PC-3 (cell line): ENCODE measurements at regions of chr3 and their contacts with region 1.

Region 1: DNA sequence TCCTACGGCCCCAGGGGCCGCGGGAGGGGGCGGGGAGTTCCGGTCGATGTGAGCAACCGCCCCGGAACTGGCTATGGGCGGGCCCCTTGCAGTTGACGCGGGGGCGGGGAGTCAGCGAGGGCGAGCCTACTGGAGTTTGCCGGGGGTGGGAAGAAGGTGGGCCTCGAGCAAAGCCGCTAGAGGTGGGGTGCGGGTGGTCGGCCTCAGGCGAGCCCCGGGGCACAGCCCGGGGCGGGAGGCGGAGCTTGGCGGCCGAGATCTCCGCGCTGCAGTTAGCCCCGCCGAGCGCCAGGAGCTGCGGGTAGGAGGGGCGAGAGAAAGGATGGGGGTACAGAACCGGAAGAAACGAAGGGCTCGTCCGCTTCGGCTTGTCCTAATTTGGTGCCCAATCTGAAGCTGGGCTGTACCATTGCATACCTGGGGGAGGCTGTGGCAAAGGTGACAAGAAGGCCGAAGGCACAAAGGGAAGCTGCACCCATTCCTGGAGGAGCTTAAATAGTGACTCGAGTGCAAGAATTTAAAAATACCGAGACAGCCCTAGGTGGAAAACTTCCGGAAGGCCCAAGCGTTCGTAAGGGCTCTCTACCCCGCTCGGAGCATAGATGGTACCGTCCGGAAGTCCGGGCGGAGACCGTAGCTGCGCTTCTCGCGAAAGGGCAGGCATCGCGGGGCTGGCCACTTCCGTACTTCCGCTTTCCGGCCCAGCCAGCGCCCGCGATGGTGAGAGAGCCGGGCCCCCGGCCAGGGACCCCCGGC is at the starts of genes ARPC4 and TADA3:
- DNase-seq: peak; percentile 90
- ATAC-seq: peak; percentile 88
- H3K4me3 ChIP-seq: peak within 1 kb of the TSS; percentile 99
- H3K27ac ChIP-seq: peak within 1 kb of the TSS; percentile 79
- H3K4me1 ChIP-seq: peaks cover 11% of the 10 kb centered on the region
- H3K27me3 ChIP-seq: no peaks in the 10 kb centered on the region
- CTCF ChIP-seq: no peak
- total RNA-seq, gene ARPC4: 131 and 223 TPM in 2 replicates
- total RNA-seq, gene TADA3: 85.4 and 85.9 TPM in 2 replicates

Region 2: DNA sequence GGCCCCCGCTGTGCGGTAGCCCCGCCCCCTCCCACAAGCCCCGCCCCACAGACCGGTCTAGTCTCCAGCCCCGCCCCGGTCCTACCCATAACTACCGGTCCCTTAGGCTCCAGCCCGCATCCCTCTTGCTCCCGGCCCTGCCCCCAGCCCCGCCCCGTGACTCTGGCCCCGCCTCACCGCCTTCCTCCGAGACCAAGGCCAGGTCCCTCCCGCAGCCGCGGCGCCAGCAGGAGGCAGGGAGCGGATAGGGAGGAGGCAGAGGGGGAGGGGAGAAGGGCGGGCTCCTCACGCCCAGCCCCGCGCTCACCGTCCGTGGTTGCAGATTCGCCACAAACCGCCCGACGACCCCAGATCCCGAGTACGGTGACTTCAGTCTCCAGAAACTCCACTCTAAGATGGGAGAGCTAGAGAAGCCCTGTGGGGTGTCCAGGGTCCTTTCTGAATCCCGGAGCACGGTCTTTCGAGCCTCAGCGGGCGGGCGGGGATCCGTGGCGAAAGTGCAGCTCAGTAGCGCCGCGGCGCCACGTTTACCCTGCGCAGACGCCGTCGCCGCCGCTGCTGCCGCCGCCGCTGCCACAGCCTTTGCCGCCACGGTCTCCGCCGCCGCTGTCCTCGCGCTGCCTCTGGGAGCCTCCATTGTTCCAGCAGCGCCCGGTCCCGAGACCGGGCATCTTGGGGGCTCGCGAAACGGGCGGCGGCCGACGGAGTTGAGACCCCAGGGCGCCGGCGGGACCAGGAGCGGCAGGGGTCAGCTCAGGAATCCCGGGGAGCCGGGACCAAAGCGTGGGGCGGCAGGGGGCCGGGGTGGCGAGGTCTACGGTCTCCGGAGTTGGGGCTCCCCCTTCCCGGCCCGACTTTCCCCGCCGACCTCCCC is 61.1 kb before region 1 on chr3 and contains the start of gene BRPF1:
- CTCF ChIA-PET with region 1: no interaction called
- POLR2A ChIA-PET with region 1: no interaction called
- intact Hi-C with region 1: loop called (anchors 1 kb)
- DNase-seq: peak; percentile 98
- ATAC-seq: peak; percentile 96
- H3K4me3 ChIP-seq: peak within 1 kb of the TSS; percentile 89
- H3K27ac ChIP-seq: peak within 1 kb of the TSS; percentile 92
- H3K4me1 ChIP-seq: peaks cover 23% of the 10 kb centered on the region
- H3K27me3 ChIP-seq: no peaks in the 10 kb centered on the region
- CTCF ChIP-seq: no peak
- total RNA-seq, gene BRPF1: 27.0 and 29.8 TPM in 2 replicates

Region 3: GRCh38 chr3:9749645-9750555 is 42.7 kb before region 1 on chr3 and contains the start of gene OGG1:
- CTCF ChIA-PET with region 1: no interaction called
- POLR2A ChIA-PET with region 1: interaction called, 3 read pairs
- intact Hi-C with region 1: loop called (anchors 1 kb)
- DNase-seq: peak; percentile 98
- ATAC-seq: peak; percentile 91
- H3K4me3 ChIP-seq: peak within 1 kb of the TSS; percentile 83
- H3K27ac ChIP-seq: peak within 1 kb of the TSS; percentile 46
- H3K4me1 ChIP-seq: peaks cover 28% of the 10 kb centered on the region
- H3K27me3 ChIP-seq: no peaks in the 10 kb centered on the region
- CTCF ChIP-seq: no peak
- total RNA-seq, gene OGG1: 38.7 and 47.3 TPM in 2 replicates

Region 4: DNA sequence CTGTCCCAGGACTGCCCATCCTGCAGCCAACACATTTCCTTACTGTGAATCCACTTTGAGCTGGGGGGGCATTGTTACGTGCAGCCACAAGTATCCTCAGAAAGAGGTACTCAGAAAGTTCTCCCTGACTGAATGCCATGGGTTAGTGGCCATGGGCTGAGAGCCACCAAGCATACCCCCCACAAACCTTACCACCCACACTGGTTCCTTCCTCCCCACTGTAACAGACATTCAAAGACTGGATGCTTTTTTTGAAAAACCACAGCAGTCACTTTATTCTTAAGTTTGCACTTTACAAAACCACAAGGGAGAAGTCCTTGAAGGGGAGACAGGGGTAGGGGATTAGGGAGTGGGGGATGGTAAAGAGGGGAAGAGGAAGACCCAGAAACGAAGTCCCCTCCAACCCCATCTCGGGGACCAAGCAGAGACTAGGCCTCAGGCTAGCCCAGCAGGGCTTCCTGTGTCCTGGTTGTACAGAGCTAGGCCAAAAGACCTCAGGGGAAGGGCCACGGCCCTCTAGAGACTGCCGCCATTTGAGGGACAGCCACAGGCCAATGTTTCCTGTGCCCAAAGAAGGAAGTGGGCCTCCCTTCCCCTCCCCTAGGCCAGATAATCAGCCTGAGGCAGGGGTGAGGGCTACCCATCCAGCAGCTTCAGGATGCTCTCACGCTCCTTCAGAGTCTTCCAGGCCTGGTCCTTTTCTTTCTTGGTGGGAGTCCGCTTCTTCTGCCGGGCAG is 12.7 kb before region 1 on chr3:
- CTCF ChIA-PET with region 1: no interaction called
- POLR2A ChIA-PET with region 1: interaction called, 12 read pairs
- intact Hi-C with region 1: no loop called
- DNase-seq: no peak
- ATAC-seq: no peak
- H3K4me3 ChIP-seq: no peak overlapping the region
- H3K27ac ChIP-seq: no peak overlapping the region
- H3K4me1 ChIP-seq: no peaks in the 10 kb centered on the region
- H3K27me3 ChIP-seq: no peaks in the 10 kb centered on the region
- CTCF ChIP-seq: no peak